ENCODE measurements at regions of chr20 and their contacts with region 1.

Region 1: GRCh38 chr20:1894951-1895673 is at the start of gene SIRPA:
- DNase-seq: no peak
- H3K4me3 ChIP-seq: peak within 1 kb of the TSS; percentile 48 to 74 (median 68)
- H3K27ac ChIP-seq: peak within 1 kb of the TSS; percentile 89 to 98 (median 93)
- H3K4me1 ChIP-seq: peaks cover 32 to 86% (median 47%) of the 10 kb centered on the region in 3 donors
- H3K27me3 ChIP-seq: peaks cover 0 to 5% (median 0%) of the 10 kb centered on the region in 4 donors
- CTCF ChIP-seq: no peak
- POLR2A ChIP-seq: peak in 2 of 4 donors; percentile 11 to 16
- total RNA-seq, gene SIRPA: 9.3 to 23.4 (median 20.1) TPM

Region 2: GRCh38 chr20:1802385-1803060 is 92.6 kb before region 1 on chr20:
- intact Hi-C with region 1: loop called (anchors 10 kb)
- DNase-seq: no peak
- H3K4me3 ChIP-seq: peak overlapping the region; percentile 53 to 72 (median 60)
- H3K27ac ChIP-seq: peak overlapping the region; percentile 62 to 84 (median 75)
- H3K4me1 ChIP-seq: peaks cover 19 to 47% (median 21%) of the 10 kb centered on the region in 3 donors
- H3K27me3 ChIP-seq: peaks cover 0 to 22% (median 1%) of the 10 kb centered on the region in 4 donors
- CTCF ChIP-seq: peak; percentile 26 to 79 (median 58)
- POLR2A ChIP-seq: no peak

Region 3: DNA sequence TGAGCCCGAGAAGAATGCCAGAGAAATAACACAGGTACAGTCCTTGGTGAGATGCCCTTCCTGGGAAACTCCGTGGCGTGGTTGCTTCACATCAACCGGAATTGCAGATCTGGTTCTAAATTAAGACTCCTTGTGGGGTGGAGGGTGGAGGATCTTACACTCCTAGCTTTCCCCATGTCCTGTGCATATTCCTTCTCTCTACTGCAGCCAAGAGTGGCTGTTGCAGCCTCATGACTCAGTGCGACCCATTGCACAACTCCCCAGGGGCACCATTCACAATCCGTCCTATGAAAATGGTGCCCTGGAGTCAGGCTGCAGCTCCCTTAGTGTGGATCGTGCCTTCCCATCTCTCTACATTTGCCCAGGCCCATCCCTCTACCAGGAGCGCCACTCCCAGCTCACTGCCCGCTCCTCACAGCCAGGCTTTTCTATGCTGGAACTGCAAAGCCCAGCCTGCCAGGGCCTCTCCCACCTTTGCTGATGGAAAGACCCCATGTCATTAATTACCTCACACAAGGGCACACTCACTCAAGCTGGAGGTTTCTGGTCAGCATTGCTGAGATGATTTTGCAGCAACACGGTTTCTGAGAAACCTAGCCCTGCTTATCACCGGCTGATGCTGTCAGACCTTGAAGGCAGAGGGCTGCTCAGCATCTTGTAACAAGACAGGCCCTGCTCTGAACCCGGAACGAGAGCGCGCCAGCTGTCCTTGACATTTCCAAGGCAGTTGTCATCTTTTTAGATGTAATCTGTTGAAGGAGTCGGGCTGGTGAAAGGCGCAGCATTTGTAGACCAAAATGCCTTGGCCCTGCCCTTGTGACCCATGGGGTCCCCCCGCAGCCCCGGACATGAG is 39.8 kb after region 1 on chr20:
- intact Hi-C with region 1: loop called (anchors 5 kb)
- DNase-seq: no peak
- H3K4me3 ChIP-seq: no peak overlapping the region
- H3K27ac ChIP-seq: peak overlapping the region in 3 of 4 donors; percentile 28 to 77 (median 62)
- H3K4me1 ChIP-seq: peaks cover 7 to 28% (median 22%) of the 10 kb centered on the region in 3 donors
- H3K27me3 ChIP-seq: no peaks in the 10 kb centered on the region
- CTCF ChIP-seq: no peak
- POLR2A ChIP-seq: no peak